Naive thymus-derived CD4-positive, alpha-beta T cell (primary cell): ENCODE measurements at regions of chr1 and their contacts with region 1.

Region 1: DNA sequence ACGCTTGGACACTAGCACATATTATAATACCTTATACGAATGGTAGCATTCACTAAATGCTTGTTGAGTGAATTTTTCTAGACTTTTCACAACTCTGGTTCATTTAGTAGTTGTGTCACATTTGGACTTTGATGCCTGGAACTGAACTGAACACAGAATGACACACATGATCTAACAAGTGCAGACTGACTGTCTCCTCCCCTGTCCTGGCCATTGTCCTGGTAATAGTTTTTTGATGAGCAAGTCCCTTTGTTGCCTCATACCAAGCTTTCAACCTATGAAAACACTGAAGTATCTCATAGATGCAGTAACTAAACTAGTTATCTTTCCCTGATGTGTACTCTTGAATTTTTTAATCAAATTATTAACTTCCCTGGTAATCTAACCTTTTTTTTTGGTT is 66.4 kb downstream of the LRRC8D start:
- DNase-seq: no peak
- ATAC-seq: no peak
- H3K4me3 ChIP-seq: no peak overlapping the region
- H3K4me3 Mint-ChIP-seq: no peak overlapping the region
- H3K27ac ChIP-seq: no peak overlapping the region
- H3K27ac Mint-ChIP-seq: no peak overlapping the region
- H3K4me1 ChIP-seq: no peaks in the 10 kb centered on the region
- H3K4me1 Mint-ChIP-seq: peaks cover 15 to 50% (median 35%) of the 10 kb centered on the region in 7 donors
- H3K27me3 ChIP-seq: no peaks in the 10 kb centered on the region
- H3K27me3 Mint-ChIP-seq: no peaks in the 10 kb centered on the region

Region 2: GRCh38 chr1:89837510-89837909 is 49.8 kb before region 1 on chr1:
- CTCF ChIA-PET with region 1: no interaction called
- POLR2A ChIA-PET with region 1: no interaction called
- intact Hi-C with region 1: no loop called
- DNase-seq: no peak
- ATAC-seq: no peak
- H3K4me3 ChIP-seq: no peak overlapping the region
- H3K4me3 Mint-ChIP-seq: no peak overlapping the region
- H3K27ac ChIP-seq: no peak overlapping the region
- H3K27ac Mint-ChIP-seq: no peak overlapping the region
- H3K4me1 ChIP-seq: peaks cover 2 to 3% of the 10 kb centered on the region in 2 donors
- H3K4me1 Mint-ChIP-seq: peaks cover 4 to 22% (median 5%) of the 10 kb centered on the region in 7 donors
- H3K27me3 ChIP-seq: no peaks in the 10 kb centered on the region
- H3K27me3 Mint-ChIP-seq: peaks cover 0 to 5% (median 0%) of the 10 kb centered on the region in 5 donors

Region 3: GRCh38 chr1:89873770-89874169 is 13.5 kb before region 1 on chr1:
- CTCF ChIA-PET with region 1: interaction called, 3 read pairs
- POLR2A ChIA-PET with region 1: interaction called, 3 read pairs
- intact Hi-C with region 1: loop called in 1 of 2 experiments (anchors 2 kb)
- DNase-seq: peak in 2 of 9 donors; percentile 32 to 33
- ATAC-seq: peak; percentile 49
- H3K4me3 ChIP-seq: no peak overlapping the region
- H3K4me3 Mint-ChIP-seq: peak overlapping the region in 1 of 10 donors; percentile 26
- H3K27ac ChIP-seq: no peak overlapping the region
- H3K27ac Mint-ChIP-seq: peak overlapping the region in 5 of 9 donors; percentile 11 to 84 (median 73)
- H3K4me1 ChIP-seq: peaks cover 5 to 21% of the 10 kb centered on the region in 2 donors
- H3K4me1 Mint-ChIP-seq: peaks cover 27 to 89% (median 73%) of the 10 kb centered on the region in 7 donors
- H3K27me3 ChIP-seq: no peaks in the 10 kb centered on the region
- H3K27me3 Mint-ChIP-seq: no peaks in the 10 kb centered on the region

Region 4: DNA sequence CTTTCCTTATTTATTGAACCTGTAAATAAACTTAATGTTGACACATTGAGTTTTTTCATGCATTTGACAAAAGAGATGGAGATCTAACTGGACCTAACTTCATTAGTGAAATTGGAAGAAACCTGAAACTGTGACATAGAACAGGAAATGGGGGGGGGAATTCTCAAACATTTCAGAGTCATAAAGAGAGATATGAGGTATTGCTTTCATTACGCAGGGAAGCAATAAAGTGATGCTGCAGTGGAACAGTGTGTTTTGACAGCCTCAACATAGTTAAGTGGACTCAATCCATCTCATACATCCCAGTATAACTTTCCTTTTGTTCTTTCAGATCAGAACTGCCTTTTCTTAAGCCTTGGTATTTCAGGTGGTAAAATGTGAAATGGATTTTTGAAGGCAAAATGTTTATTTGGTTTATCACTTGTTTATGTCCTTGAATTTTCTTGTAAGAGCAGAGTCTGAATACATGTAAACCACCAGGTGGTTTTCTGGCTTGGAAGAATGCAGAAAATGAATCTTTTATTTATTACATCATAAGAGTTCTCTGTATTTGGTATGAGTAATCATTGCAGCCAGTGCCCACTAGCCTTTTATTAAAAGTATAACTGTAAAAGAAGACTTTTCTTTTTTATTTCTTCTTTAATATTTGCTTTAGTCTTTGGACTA is 240.2 kb after region 1 on chr1:
- CTCF ChIA-PET with region 1: no interaction called
- POLR2A ChIA-PET with region 1: no interaction called
- intact Hi-C with region 1: no loop called
- DNase-seq: no peak
- ATAC-seq: no peak
- H3K4me3 ChIP-seq: no peak overlapping the region
- H3K4me3 Mint-ChIP-seq: no peak overlapping the region
- H3K27ac ChIP-seq: no peak overlapping the region
- H3K27ac Mint-ChIP-seq: no peak overlapping the region
- H3K4me1 ChIP-seq: no peaks in the 10 kb centered on the region
- H3K4me1 Mint-ChIP-seq: no peaks in the 10 kb centered on the region
- H3K27me3 ChIP-seq: peaks cover 0 to 3% of the 10 kb centered on the region in 2 donors
- H3K27me3 Mint-ChIP-seq: peaks cover 8 to 45% (median 26%) of the 10 kb centered on the region in 5 donors

Region 5: GRCh38 chr1:90879281-90879680 is 992.0 kb after region 1 on chr1:
- CTCF ChIA-PET with region 1: no interaction called
- POLR2A ChIA-PET with region 1: no interaction called
- intact Hi-C with region 1: no loop called
- DNase-seq: peak in 1 of 9 donors; percentile 6
- ATAC-seq: no peak
- H3K4me3 ChIP-seq: no peak overlapping the region
- H3K4me3 Mint-ChIP-seq: no peak overlapping the region
- H3K27ac ChIP-seq: no peak overlapping the region
- H3K27ac Mint-ChIP-seq: no peak overlapping the region
- H3K4me1 ChIP-seq: no peaks in the 10 kb centered on the region
- H3K4me1 Mint-ChIP-seq: no peaks in the 10 kb centered on the region
- H3K27me3 ChIP-seq: no peaks in the 10 kb centered on the region
- H3K27me3 Mint-ChIP-seq: peaks cover 4 to 30% (median 9%) of the 10 kb centered on the region in 5 donors